Right ventricle myocardium superior (tissue), 1 donor: ENCODE measurements at regions of chr2 and their contacts with region 1.

Region 1: GRCh38 chr2:118046634-118047210 is 32.9 kb upstream of the CCDC93 start:
- DNase-seq: no peak
- ATAC-seq: peak; percentile 67

Region 2: GRCh38 chr2:118855451-118856279 is 808.9 kb after region 1 on chr2:
- intact Hi-C with region 1: loop called (anchors 5 kb)
- DNase-seq: peak; percentile 86
- ATAC-seq: peak; percentile 96